Ascending aorta (tissue), 2 donors: ENCODE measurements at regions of chr16 and their contacts with region 1.

Region 1: GRCh38 chr16:75764154-75764768 is 38.0 kb upstream of the CPHXL start:
- DNase-seq: peak in 1 of 2 donors; percentile 70
- H3K4me3 ChIP-seq: no peak overlapping the region
- H3K27ac ChIP-seq: no peak overlapping the region
- H3K4me1 ChIP-seq: no peaks in the 10 kb centered on the region
- H3K27me3 ChIP-seq: no peaks in the 10 kb centered on the region
- CTCF ChIP-seq: peak; percentile 62 to 83 (median 74)

Region 2: DNA sequence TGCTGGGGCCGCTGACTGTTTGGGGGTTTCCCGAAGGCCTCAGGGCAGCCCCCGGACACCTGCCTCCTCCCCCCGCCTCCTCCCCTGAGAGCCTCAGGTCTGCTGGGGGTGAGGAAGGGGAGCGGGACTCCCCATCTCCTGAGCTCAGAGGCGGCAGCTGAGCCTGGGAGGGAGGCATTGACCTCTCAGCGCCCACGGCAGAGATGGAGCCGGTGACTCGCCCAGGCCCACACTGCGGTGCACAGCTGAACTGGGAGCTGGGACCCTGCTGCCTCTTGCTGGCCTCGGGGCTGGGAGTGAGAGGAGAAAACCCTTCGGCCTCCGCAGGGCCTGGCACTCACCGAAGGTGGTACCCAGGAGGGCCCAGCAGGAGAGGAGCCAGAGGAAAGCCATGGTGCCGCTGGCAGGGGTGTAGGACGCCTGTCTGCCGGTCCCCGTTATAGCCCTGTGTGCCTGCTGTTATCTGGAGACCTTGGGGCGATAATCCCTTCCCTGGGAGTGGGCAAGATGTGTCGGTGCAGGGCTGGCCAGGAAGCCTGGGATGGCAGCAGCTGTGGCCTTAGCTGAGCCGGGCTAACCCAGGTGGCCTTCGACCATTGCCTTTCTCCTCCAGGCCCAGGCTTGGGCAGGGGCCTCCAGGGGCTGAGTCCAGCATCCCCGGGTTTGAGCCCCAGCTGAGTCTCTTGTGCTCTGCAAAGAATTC is 557.4 kb before region 1 on chr16 and contains the start of gene CTRB2:
- intact Hi-C with region 1: loop called (anchors 5 kb)
- DNase-seq: no peak
- H3K4me3 ChIP-seq: no peak within 1 kb of the TSS
- H3K27ac ChIP-seq: no peak within 1 kb of the TSS
- H3K4me1 ChIP-seq: no peaks in the 10 kb centered on the region
- H3K27me3 ChIP-seq: no peaks in the 10 kb centered on the region
- CTCF ChIP-seq: no peak
- total RNA-seq, gene CTRB2: not detected

Region 3: DNA sequence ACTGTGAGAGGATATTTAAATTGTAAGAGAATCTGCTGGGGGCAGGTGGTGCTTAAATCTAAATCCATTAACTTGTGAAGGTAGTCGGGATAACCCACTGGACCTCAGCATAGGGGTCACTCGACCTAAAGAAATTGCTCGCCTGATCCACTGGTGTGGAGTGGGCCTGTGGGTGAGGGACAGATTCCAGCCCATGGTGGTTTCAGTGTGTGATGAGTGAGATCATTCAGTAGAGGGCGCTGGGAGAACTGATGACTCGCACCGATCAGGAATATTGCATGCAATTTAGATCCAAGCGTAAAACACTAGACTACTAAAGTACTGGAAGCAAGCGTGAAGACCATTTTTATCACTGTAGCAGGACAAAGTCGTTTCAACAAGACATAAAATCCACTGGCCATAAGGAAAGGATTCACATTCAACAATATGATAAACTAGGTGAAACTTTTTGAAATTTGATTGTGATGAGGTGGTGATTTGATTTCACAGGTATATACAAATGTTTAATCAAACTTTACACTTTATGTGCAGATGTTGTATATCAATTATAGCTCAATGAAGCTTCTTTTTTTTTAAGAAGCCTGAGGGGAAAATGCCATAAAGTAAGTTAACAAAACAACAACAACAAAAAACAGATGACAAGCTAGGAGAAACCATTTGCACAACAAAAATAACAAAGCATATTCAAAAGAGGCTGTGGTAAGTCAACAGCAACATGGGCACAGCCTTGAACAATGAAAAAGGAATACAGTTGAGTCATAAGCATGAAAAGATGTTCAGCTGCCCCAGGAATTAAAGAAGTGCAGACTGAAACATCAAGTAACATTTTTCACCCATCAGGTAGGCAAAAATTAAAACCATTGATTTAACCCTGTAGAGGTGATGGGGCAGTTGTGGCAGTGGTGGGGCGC is 292.3 kb before region 1 on chr16:
- intact Hi-C with region 1: loop called (anchors 2 kb)
- DNase-seq: peak in 1 of 2 donors; percentile 75
- H3K4me3 ChIP-seq: no peak overlapping the region
- H3K27ac ChIP-seq: no peak overlapping the region
- H3K4me1 ChIP-seq: no peaks in the 10 kb centered on the region
- H3K27me3 ChIP-seq: no peaks in the 10 kb centered on the region
- CTCF ChIP-seq: peak; percentile 76 to 83 (median 79)

Region 4: GRCh38 chr16:75576384-75576811 is 187.9 kb before region 1 on chr16:
- intact Hi-C with region 1: no loop called
- DNase-seq: peak in 1 of 2 donors; percentile 28
- H3K4me3 ChIP-seq: no peak overlapping the region
- H3K27ac ChIP-seq: peak overlapping the region in 1 of 2 donors; percentile 41
- H3K4me1 ChIP-seq: peaks cover 0 to 9% of the 10 kb centered on the region in 2 donors
- H3K27me3 ChIP-seq: no peaks in the 10 kb centered on the region
- CTCF ChIP-seq: no peak

Region 5: GRCh38 chr16:75647492-75648264 is 116.6 kb before region 1 on chr16 and contains the starts of genes KARS1 and TERF2IP:
- intact Hi-C with region 1: loop called (anchors 2 kb)
- DNase-seq: peak; percentile 75 to 95
- H3K4me3 ChIP-seq: peak within 1 kb of the TSS; percentile 96 to 97
- H3K27ac ChIP-seq: peak within 1 kb of the TSS; percentile 96 to 97
- H3K4me1 ChIP-seq: peaks cover 9 to 32% of the 10 kb centered on the region in 2 donors
- H3K27me3 ChIP-seq: no peaks in the 10 kb centered on the region
- CTCF ChIP-seq: no peak
- total RNA-seq, gene KARS1: 65.2 TPM
- total RNA-seq, gene TERF2IP: 41.0 TPM